Activated T-helper 1 cell treated with anti-CD3 and anti-CD28 coated beads, Interleukin-12 subunit alpha, Interleukin-12 subunit beta, Interleukin-2, Interleukin-4 antibody, amounts not matched to agents 30 ng/mL and 10 ng/mL and 1 ng/mL, durations not matched to agents 14 hours and 24 hours and 36 hours (primary cell): ENCODE measurements at regions of chr5 and their contacts with region 1.

Region 1: GRCh38 chr5:57298295-57298984 is 124.6 kb downstream of the GPBP1 start:
- DNase-seq: peak; percentile 73
- H3K4me3 Mint-ChIP-seq: peak overlapping the region; percentile 68
- H3K27ac Mint-ChIP-seq: peak overlapping the region; percentile 64
- H3K4me1 Mint-ChIP-seq: peaks cover 30% of the 10 kb centered on the region
- H3K27me3 Mint-ChIP-seq: peaks cover 2% of the 10 kb centered on the region

Region 2: GRCh38 chr5:56900858-56901578 is 397.4 kb before region 1 on chr5:
- intact Hi-C with region 1: loop called (anchors 2 kb)
- DNase-seq: no peak
- H3K4me3 Mint-ChIP-seq: no peak overlapping the region
- H3K27ac Mint-ChIP-seq: no peak overlapping the region
- H3K4me1 Mint-ChIP-seq: no peaks in the 10 kb centered on the region
- H3K27me3 Mint-ChIP-seq: peaks cover 10% of the 10 kb centered on the region

Region 3: DNA sequence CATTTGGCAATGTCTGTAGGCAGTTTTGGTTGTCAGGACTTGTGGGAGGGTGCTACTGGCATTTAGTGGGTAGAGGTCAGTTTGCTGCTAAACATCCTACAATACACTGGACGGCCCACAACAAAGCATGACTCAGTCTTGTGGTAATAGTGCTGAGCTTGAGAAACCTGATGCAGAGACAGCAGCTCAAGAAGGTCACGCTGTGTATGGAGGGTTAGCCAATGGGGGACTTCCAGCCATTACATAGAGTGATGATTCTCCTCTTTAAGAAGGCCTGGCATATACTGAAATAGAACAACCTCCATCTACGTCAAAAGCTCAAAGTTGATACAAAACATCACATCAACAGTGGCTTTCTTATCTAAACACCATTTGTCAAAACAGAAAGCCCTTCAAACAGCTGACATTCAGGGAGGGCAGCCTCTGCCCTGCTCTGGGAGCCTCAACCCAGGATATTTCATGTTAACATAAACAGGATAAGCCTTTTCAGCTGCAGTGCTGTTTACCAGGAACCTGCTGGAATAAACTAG is 18.4 kb after region 1 on chr5:
- intact Hi-C with region 1: no loop called
- DNase-seq: no peak
- H3K4me3 Mint-ChIP-seq: no peak overlapping the region
- H3K27ac Mint-ChIP-seq: peak overlapping the region; percentile 52
- H3K4me1 Mint-ChIP-seq: peaks cover 11% of the 10 kb centered on the region
- H3K27me3 Mint-ChIP-seq: no peaks in the 10 kb centered on the region

Region 4: GRCh38 chr5:57383093-57383861 is 84.8 kb after region 1 on chr5:
- intact Hi-C with region 1: loop called (anchors 1 kb)
- DNase-seq: peak; percentile 16
- H3K4me3 Mint-ChIP-seq: peak overlapping the region; percentile 8
- H3K27ac Mint-ChIP-seq: peak overlapping the region; percentile 61
- H3K4me1 Mint-ChIP-seq: peaks cover 12% of the 10 kb centered on the region
- H3K27me3 Mint-ChIP-seq: peaks cover 2% of the 10 kb centered on the region

Region 5: GRCh38 chr5:57499262-57500050 is 201.0 kb after region 1 on chr5:
- intact Hi-C with region 1: loop called (anchors 1 kb)
- DNase-seq: no peak
- H3K4me3 Mint-ChIP-seq: peak overlapping the region; percentile 61
- H3K27ac Mint-ChIP-seq: no peak overlapping the region
- H3K4me1 Mint-ChIP-seq: peaks cover 36% of the 10 kb centered on the region
- H3K27me3 Mint-ChIP-seq: peaks cover 2% of the 10 kb centered on the region

Region 6: DNA sequence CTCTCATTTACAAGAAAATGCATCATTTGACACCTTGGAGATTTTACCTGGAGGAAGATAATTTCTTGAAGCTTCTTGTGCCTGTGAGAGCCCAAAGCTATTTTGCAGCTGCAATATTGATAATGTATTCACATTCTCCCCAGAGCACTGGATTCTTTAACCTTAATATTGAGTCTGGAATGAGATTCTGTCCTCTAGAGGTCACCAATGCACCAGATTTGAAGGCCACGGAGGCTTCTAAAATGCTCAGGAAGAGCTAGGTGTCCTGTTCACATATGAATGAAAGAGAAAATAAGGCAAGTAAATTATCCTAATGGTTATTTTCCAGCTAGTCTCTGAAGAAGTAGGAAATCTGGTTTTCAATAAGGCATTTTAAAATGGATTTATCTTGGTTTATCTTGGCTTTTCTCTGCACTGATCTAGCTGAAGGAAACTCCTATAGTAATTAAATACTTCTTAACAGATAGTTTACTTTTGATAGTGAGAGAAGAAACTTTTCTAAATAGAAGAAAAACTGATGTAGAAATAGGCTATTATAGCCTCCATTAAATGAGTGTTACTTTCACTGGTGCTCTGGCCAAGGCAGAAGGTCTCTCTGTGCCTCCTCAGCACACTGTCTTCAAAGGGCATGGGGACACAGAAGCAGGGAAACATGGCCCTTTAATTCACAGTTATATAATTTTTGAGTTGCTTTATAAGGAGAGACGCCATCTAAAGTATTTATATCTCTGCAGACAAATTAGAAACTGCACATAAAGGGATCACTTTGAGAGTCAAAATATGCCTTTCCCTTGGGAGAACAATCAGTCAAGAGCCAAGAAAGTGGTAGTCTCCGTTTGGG is 481.2 kb after region 1 on chr5:
- intact Hi-C with region 1: loop called (anchors 2 kb)
- DNase-seq: no peak
- H3K4me3 Mint-ChIP-seq: no peak overlapping the region
- H3K27ac Mint-ChIP-seq: no peak overlapping the region
- H3K4me1 Mint-ChIP-seq: no peaks in the 10 kb centered on the region
- H3K27me3 Mint-ChIP-seq: peaks cover 1% of the 10 kb centered on the region